ENCODE measurements at regions of chr19 and their contacts with region 1.

Region 1: GRCh38 chr19:662962-663681 is at the start of gene RNF126:
- DNase-seq: peak; percentile 66 to 87
- H3K4me3 ChIP-seq: peak within 1 kb of the TSS; percentile 99
- H3K27ac ChIP-seq: peak within 1 kb of the TSS; percentile 61
- H3K4me1 ChIP-seq: peaks cover 14% of the 10 kb centered on the region
- H3K27me3 ChIP-seq: no peaks in the 10 kb centered on the region
- CTCF ChIP-seq: no peak
- total RNA-seq, gene RNF126: 54.4 and 63.7 TPM in 2 replicates

Region 2: DNA sequence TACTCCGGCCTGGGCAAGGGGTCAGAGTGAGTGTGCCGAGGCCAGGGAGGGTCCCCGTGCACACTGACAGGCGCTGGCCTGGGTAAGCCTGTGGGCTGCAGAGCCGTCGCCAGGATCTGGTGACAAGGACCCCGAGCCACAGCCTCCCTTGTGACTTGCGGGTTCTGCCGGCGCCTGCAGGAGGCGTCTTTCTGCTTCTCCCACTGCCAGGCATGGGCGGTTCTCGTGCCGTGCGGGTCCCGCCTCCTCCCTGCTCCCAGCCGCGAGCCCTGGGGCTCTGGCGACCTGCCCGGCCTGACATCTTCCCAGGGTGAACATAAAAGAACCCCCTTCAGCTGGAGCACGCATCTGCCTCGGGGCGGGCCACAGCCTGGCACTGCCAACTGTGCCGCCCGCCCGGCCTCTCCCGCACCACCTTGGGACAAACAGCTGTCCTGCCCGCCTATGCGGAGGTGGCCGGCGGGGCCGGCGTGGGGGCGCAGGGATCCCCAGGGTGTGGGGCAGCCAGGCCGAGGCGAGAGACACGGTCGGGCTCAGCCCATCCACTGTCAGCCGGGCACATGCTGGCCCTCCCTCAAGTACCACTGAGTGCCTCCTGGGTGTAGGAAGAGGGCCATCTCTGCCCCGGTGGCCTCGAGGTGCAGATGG is 74.9 kb before region 1 on chr19:
- CTCF ChIA-PET with region 1: no interaction called
- POLR2A ChIA-PET with region 1: no interaction called
- intact Hi-C with region 1: loop called (anchors 5 kb)
- DNase-seq: peak; percentile 75 to 92
- H3K4me3 ChIP-seq: peak overlapping the region; percentile 9; the same call in 1 of the 2 replicates
- H3K27ac ChIP-seq: no peak overlapping the region
- H3K4me1 ChIP-seq: peaks cover 15% of the 10 kb centered on the region; the same call in 1 of the 2 replicates
- H3K27me3 ChIP-seq: peaks cover 11% of the 10 kb centered on the region; the same call in 1 of the 2 replicates
- CTCF ChIP-seq: peak; percentile 69

Region 3: DNA sequence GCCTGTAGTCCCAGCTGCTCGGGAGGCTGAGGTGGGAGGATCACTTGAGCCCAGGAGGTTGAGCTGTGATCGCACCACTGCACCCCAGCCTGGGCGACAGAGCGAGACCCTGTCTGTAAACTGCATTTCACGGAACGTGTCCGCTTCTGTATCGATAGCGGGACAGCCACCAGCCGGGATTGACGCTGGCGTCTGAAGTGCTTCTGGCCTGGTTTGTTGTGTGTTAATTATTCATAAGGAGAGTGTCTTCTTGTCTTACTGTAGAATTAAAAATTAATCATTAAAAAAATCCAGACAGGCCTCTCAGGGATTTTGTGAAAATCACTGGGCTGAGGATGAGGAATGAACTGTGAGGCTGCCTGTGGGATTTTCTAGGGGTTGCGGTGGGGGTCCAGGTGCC is 71.6 kb after region 1 on chr19:
- CTCF ChIA-PET with region 1: no interaction called
- POLR2A ChIA-PET with region 1: no interaction called
- intact Hi-C with region 1: loop called (anchors 1 kb)
- DNase-seq: no peak
- H3K4me3 ChIP-seq: no peak overlapping the region
- H3K27ac ChIP-seq: no peak overlapping the region
- H3K4me1 ChIP-seq: no peaks in the 10 kb centered on the region
- H3K27me3 ChIP-seq: no peaks in the 10 kb centered on the region
- CTCF ChIP-seq: no peak

Region 4: GRCh38 chr19:850221-850978 is 187.3 kb after region 1 on chr19:
- CTCF ChIA-PET with region 1: no interaction called
- POLR2A ChIA-PET with region 1: interaction called, 11 read pairs
- intact Hi-C with region 1: no loop called
- DNase-seq: peak; percentile 53 to 67
- H3K4me3 ChIP-seq: no peak overlapping the region
- H3K27ac ChIP-seq: no peak overlapping the region
- H3K4me1 ChIP-seq: peaks cover 5% of the 10 kb centered on the region; the same call in 1 of the 2 replicates
- H3K27me3 ChIP-seq: peaks cover 36% of the 10 kb centered on the region
- CTCF ChIP-seq: no peak

Region 5: DNA sequence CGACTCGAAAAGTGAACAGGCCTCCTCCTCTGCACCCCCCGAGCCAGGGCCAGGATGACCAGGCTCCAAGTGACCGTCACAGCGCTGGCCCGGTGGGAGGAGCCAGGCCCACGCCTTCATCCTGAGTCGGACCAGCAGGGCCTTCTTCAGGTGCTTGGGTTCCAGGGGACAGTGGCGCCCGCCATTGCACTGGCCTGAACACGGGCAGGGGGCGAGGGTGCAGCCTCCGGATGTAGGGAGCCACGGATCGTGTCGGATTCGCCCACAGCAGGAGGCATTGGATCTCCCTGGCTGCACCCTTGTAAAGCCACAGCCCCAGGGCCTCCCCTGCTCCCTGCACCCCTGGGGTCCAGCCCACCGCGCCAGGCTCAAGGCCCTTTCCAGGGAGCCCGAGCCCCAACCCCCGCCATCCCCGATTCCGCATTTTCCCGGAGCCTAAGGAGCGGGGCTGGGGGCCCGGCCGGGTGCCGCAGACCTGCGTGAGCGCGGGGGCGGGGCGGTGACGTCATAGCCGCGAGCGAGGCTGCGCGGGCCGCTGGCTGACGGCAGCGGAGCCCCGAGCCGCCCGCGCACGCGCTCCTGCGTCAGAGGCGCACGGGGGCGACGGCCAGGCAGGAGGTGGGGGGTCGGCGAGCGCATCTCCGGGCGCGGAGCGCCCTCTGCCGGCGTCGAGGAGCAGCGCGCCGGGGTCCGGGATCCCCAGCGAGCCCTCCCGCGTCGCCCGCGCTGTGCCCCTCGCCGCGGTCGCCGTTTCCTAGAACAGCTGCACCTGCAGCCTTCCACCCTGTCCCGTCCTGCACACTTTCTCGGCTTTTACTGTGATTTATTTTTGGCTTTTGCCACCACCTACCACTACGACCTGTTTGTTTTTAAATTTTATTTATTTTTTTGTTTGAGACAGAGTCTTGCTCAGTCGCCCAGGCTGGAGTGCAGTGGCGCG is 576.9 kb after region 1 on chr19:
- CTCF ChIA-PET with region 1: interaction called, 12 read pairs
- POLR2A ChIA-PET with region 1: no interaction called
- intact Hi-C with region 1: no loop called
- DNase-seq: peak; percentile 43 to 85
- H3K4me3 ChIP-seq: peak overlapping the region; percentile 73
- H3K27ac ChIP-seq: no peak overlapping the region
- H3K4me1 ChIP-seq: peaks cover 23% of the 10 kb centered on the region
- H3K27me3 ChIP-seq: no peaks in the 10 kb centered on the region
- CTCF ChIP-seq: peak; percentile 53